B cell (primary cell): ENCODE measurements at regions of chr6 and their contacts with region 1.

Region 1: GRCh38 chr6:36594029-36594815 is at the start of gene SRSF3:
- DNase-seq: peak; percentile 99
- ATAC-seq: peak; percentile 91
- H3K4me3 ChIP-seq: peak within 1 kb of the TSS; percentile 91 to 100 (median 97)
- H3K4me3 Mint-ChIP-seq: peak within 1 kb of the TSS; percentile 90
- H3K27ac ChIP-seq: peak within 1 kb of the TSS; percentile 93 to 99
- H3K27ac Mint-ChIP-seq: peak within 1 kb of the TSS; percentile 97
- H3K4me1 ChIP-seq: peaks cover 44 to 55% of the 10 kb centered on the region in 2 donors
- H3K4me1 Mint-ChIP-seq: peaks cover 48% of the 10 kb centered on the region
- H3K27me3 ChIP-seq: no peaks in the 10 kb centered on the region
- H3K27me3 Mint-ChIP-seq: no peaks in the 10 kb centered on the region
- CTCF ChIP-seq: peak; percentile 29
- total RNA-seq, gene SRSF3: 316 and 331 TPM in 2 replicates

Region 2: DNA sequence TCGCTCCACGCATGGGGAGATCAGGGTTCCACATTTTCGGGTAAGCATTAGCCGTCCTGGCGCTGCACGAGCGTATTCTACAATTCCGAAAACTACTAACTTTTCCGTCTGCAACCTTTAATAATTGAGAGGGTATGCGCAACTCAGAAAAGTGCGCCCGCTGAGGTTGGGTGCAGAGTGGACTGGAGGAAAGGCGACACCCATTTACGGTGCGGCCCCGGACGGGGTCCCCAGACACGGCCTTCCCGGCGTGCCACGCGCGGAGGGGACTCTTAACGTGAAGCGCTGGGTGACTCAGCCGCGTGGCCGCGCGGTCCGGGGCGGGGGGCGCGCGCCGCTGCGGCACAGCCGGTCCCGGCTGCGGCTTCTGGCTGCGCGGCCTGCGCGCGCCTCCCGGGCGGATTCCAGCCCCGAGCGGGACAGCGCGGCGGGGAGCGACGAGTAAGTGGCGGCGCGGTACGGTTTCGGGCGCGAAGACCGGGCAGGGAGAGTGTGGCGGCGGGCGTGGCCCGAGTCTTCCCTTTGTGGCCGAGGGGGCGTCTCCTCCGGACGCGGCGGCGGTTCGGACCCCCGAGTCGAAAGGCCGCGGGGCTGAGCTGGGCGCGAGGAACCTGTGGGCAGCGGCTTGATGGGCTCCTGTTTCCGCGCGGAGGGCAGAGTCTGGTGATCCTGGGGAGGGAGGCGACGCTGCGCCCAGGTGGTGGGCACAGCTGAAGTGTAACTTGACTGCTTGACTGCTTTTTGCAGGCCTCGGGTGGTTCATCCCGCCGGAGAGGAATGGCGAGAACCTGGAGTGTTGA is 151.4 kb before region 1 on chr6 and contains the starts of genes KCTD20 and PXT1:
- CTCF ChIA-PET with region 1: no interaction called
- POLR2A ChIA-PET with region 1: no interaction called
- intact Hi-C with region 1: loop called (anchors 2 kb)
- DNase-seq: peak; percentile 88
- ATAC-seq: peak; percentile 87
- H3K4me3 ChIP-seq: peak within 1 kb of the TSS; percentile 80 to 97 (median 89)
- H3K4me3 Mint-ChIP-seq: peak within 1 kb of the TSS; percentile 98
- H3K27ac ChIP-seq: peak within 1 kb of the TSS; percentile 76 to 91
- H3K27ac Mint-ChIP-seq: peak within 1 kb of the TSS; percentile 96
- H3K4me1 ChIP-seq: peaks cover 24 to 26% of the 10 kb centered on the region in 2 donors
- H3K4me1 Mint-ChIP-seq: peaks cover 35% of the 10 kb centered on the region
- H3K27me3 ChIP-seq: no peaks in the 10 kb centered on the region
- H3K27me3 Mint-ChIP-seq: no peaks in the 10 kb centered on the region
- CTCF ChIP-seq: no peak
- total RNA-seq, gene KCTD20: 37.5 and 44.3 TPM in 2 replicates
- total RNA-seq, gene PXT1: 0.27 and 0.52 TPM in 2 replicates

Region 3: DNA sequence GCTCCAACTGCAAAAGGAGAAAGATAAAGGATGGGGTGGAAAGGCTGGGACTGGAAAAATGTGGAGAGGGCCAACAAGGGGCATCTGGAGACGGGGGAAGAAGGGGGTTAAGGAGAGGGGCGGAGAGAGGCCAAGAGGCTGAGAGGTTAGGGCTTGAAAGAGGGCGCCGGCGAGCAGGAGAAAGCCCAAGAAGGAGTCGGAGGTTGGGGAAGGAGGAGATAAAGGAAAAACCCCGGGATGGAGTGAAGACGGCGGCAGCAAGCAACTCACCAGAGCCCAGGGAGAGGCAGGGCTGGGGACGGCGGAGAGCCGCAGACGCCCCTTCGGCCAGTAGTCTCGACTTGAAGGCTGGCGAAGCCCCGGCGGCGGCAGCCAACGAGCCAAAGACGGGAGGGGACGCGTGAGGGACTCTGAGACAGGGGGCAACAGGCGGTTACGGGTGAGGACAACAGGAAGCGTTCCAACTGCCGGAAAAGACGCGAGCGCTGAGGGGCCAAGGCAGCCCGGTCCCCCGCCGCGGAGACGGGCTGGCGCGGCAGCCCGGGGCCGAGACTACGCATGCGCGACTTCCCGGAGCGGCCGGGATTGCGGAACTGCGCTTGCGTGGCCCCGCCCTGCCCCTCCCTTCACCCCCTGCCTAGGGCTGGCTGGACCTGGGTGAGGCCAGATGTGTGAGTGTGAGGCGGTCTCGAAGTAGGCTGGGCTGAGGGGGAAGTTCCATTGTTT is 47.1 kb before region 1 on chr6 and contains the start of gene STK38:
- CTCF ChIA-PET with region 1: interaction called, 4 read pairs
- POLR2A ChIA-PET with region 1: interaction called, 11 read pairs
- intact Hi-C with region 1: loop called (anchors 1 kb)
- DNase-seq: peak; percentile 95
- ATAC-seq: peak; percentile 85
- H3K4me3 ChIP-seq: peak within 1 kb of the TSS; percentile 70 to 96 (median 88)
- H3K4me3 Mint-ChIP-seq: peak within 1 kb of the TSS; percentile 94
- H3K27ac ChIP-seq: peak within 1 kb of the TSS; percentile 87 to 92
- H3K27ac Mint-ChIP-seq: peak within 1 kb of the TSS; percentile 91
- H3K4me1 ChIP-seq: peaks cover 52 to 60% of the 10 kb centered on the region in 2 donors
- H3K4me1 Mint-ChIP-seq: peaks cover 59% of the 10 kb centered on the region
- H3K27me3 ChIP-seq: no peaks in the 10 kb centered on the region
- H3K27me3 Mint-ChIP-seq: no peaks in the 10 kb centered on the region
- CTCF ChIP-seq: no peak
- total RNA-seq, gene STK38: 67.4 and 71.8 TPM in 2 replicates

Region 4: GRCh38 chr6:36874443-36875249 is 280.4 kb after region 1 on chr6 and contains the start of gene PPIL1:
- CTCF ChIA-PET with region 1: no interaction called
- POLR2A ChIA-PET with region 1: no interaction called
- intact Hi-C with region 1: loop called (anchors 10 kb)
- DNase-seq: peak; percentile 96
- ATAC-seq: peak; percentile 93
- H3K4me3 ChIP-seq: peak within 1 kb of the TSS; percentile 73 to 100 (median 99)
- H3K4me3 Mint-ChIP-seq: peak within 1 kb of the TSS; percentile 99
- H3K27ac ChIP-seq: peak within 1 kb of the TSS; percentile 63 to 89
- H3K27ac Mint-ChIP-seq: peak within 1 kb of the TSS; percentile 97
- H3K4me1 ChIP-seq: peaks cover 12 to 15% of the 10 kb centered on the region in 2 donors
- H3K4me1 Mint-ChIP-seq: peaks cover 32% of the 10 kb centered on the region
- H3K27me3 ChIP-seq: peaks cover 0 to 3% (median under 1%) of the 10 kb centered on the region in 4 experiments
- H3K27me3 Mint-ChIP-seq: no peaks in the 10 kb centered on the region
- CTCF ChIP-seq: no peak
- total RNA-seq, gene PPIL1: 7.0 and 10.5 TPM in 2 replicates